HepG2 (cell line): ENCODE measurements at regions of chr1 and their contacts with region 1.

Region 1: DNA sequence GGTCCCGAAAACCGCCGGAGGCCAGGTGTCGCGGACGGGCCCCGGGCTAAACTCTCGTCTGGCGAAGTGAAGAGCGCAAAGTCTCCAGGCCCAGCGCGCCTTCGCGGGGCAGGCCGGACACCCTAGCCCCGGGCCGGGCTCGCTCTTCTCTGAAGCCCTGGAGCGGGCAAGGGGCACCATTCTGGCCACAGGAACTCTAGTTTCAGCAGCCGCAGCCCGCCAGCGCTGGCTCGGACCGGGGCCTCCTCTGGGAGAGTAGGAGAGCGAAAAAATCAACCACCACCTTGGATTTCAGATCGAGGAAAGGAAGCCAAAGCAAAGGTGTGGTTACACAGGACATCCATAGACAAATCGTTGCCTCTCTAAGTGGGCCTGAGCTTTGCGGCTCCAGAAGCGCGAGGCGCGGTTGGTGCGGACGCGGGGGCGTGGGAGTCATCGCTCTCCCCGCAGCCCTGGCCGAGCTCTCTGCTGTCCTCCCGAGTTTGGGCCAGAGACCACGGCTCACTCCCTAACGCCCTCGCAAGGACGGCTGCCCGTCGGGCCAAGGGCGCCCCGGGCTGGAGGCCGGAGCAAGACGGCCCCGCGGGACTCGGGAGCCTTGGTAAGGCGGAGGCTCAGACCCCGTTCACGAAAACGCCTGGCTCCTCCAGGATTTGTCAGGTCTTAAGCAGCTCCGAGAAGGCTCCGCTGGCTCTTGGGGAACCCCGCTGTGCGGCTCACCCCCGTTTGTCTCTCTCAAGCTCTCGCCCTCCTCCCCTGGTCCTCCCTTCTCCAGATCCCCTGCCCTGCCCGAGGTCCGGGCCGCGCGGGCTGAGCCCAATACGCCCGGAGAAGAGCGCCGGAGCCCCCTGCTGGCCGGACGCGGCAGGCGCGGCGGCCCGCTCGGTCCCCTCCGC is 132.9 kb upstream of the DPYD start:
- DNase-seq: peak; percentile 1
- ATAC-seq: peak; percentile 100
- H3K4me3 ChIP-seq: peak overlapping the region; percentile 31 to 67 (median 44); a peak in 4 of 6 replicates
- H3K27ac ChIP-seq: no peak overlapping the region
- H3K4me1 ChIP-seq: peaks cover 10% of the 10 kb centered on the region; the same call in 1 of the 2 replicates
- H3K27me3 ChIP-seq: peaks cover 3 to 16% of the 10 kb centered on the region in 2 experiments; a peak in 3 of 5 replicates
- CTCF ChIP-seq: peak; percentile 76
- EP300 ChIP-seq: no peak
- POLR2A ChIP-seq: no peak
- RAD21 ChIP-seq: peak; percentile 76

Region 2: GRCh38 chr1:96966536-96967138 is 1087.1 kb before region 1 on chr1:
- CTCF ChIA-PET with region 1: interaction called, 15 read pairs
- POLR2A ChIA-PET with region 1: no interaction called
- in situ Hi-C with region 1: loop called (anchors 10 kb)
- intact Hi-C with region 1: no loop called
- DNase-seq: peak; percentile 35
- ATAC-seq: peak; percentile 90
- H3K4me3 ChIP-seq: no peak overlapping the region
- H3K27ac ChIP-seq: no peak overlapping the region
- H3K4me1 ChIP-seq: no peaks in the 10 kb centered on the region
- H3K27me3 ChIP-seq: no peaks in the 10 kb centered on the region
- CTCF ChIP-seq: peak; percentile 75
- EP300 ChIP-seq: no peak
- POLR2A ChIP-seq: no peak
- RAD21 ChIP-seq: no peak

Region 3: DNA sequence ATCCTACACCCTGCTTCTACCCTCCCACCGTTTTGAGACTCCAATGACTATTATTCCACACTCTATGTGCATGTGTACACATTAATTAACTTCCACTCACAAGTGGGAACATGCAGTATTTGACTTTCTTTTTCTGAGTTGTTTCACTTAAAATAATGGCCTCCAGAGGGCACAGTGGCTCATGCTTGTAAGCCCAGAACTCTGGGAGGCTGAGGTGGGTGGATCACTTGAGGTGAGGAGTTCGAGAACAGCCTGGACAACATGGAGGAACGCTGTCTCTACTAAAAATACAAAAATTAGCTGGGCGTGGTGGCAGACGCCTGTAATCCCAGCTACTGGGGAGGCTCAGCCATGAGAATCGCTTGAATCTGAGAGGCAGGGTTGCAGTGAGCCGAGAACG is 867.3 kb before region 1 on chr1:
- CTCF ChIA-PET with region 1: no interaction called
- POLR2A ChIA-PET with region 1: no interaction called
- in situ Hi-C with region 1: loop called (anchors 25 kb)
- intact Hi-C with region 1: loop called (anchors 5 kb)
- DNase-seq: peak; percentile 3
- ATAC-seq: no peak; the same call in 2 of the 3 replicates
- H3K4me3 ChIP-seq: no peak overlapping the region
- H3K27ac ChIP-seq: no peak overlapping the region
- H3K4me1 ChIP-seq: no peaks in the 10 kb centered on the region
- H3K27me3 ChIP-seq: no peaks in the 10 kb centered on the region; a peak in 1 of 5 replicates
- CTCF ChIP-seq: peak; percentile 33
- EP300 ChIP-seq: no peak
- POLR2A ChIP-seq: no peak
- RAD21 ChIP-seq: 0 out of 2 replicates have a peak, but pooled peaks have one; percentile 15

Region 4: GRCh38 chr1:97243973-97244560 is 809.7 kb before region 1 on chr1:
- CTCF ChIA-PET with region 1: no interaction called
- POLR2A ChIA-PET with region 1: no interaction called
- in situ Hi-C with region 1: no loop called
- intact Hi-C with region 1: loop called (anchors 10 kb)
- DNase-seq: no peak
- ATAC-seq: no peak
- H3K4me3 ChIP-seq: no peak overlapping the region
- H3K27ac ChIP-seq: no peak overlapping the region
- H3K4me1 ChIP-seq: no peaks in the 10 kb centered on the region
- H3K27me3 ChIP-seq: no peaks in the 10 kb centered on the region
- CTCF ChIP-seq: 0 out of 2 replicates have a peak, but pooled peaks have one; percentile 5
- EP300 ChIP-seq: no peak
- POLR2A ChIP-seq: no peak
- RAD21 ChIP-seq: no peak

Region 5: DNA sequence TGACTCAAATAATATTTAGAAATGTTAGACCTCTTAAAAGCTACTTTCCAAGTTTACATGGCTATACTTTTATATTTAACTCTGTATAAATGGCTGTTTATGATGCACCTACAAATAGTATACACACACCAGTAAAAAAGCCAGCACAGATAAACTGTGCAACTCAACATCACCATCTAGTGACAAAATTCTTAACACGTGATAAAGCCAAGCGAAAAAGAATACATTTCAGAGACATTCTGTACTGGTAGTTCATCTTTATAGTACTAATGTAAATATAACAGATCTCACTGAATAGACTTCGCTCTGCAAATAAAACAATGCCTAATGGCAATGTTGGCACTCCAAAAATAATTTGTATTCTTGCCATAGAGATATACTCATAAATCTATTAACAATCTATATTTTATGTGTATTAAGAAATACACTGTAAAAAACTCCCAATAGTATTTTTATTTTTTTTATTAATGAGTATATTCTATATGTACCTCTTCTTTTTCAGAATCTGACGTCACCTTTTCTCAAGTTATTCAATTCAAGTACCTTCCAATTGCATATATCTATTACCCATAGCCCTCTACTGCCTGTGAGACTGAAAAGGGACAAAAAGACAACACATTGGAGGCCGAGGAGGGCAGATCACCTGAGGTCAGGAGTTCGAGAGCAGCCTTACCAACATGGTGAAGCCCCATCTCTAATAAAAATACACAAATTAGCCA is 233.1 kb before region 1 on chr1:
- CTCF ChIA-PET with region 1: no interaction called
- POLR2A ChIA-PET with region 1: no interaction called
- in situ Hi-C with region 1: no loop called
- intact Hi-C with region 1: loop called (anchors 5 kb)
- DNase-seq: peak; percentile 5
- ATAC-seq: peak; percentile 67
- H3K4me3 ChIP-seq: no peak overlapping the region
- H3K27ac ChIP-seq: no peak overlapping the region
- H3K4me1 ChIP-seq: no peaks in the 10 kb centered on the region
- H3K27me3 ChIP-seq: no peaks in the 10 kb centered on the region; a peak in 1 of 5 replicates
- CTCF ChIP-seq: peak; percentile 54
- EP300 ChIP-seq: no peak
- POLR2A ChIP-seq: no peak
- RAD21 ChIP-seq: no peak

Region 6: GRCh38 chr1:98468111-98468717 is 414.5 kb after region 1 on chr1:
- CTCF ChIA-PET with region 1: no interaction called
- POLR2A ChIA-PET with region 1: no interaction called
- in situ Hi-C with region 1: no loop called
- intact Hi-C with region 1: loop called (anchors 5 kb)
- DNase-seq: peak; percentile 10
- ATAC-seq: no peak
- H3K4me3 ChIP-seq: no peak overlapping the region
- H3K27ac ChIP-seq: no peak overlapping the region
- H3K4me1 ChIP-seq: no peaks in the 10 kb centered on the region
- H3K27me3 ChIP-seq: no peaks in the 10 kb centered on the region
- CTCF ChIP-seq: peak; percentile 52
- EP300 ChIP-seq: no peak
- POLR2A ChIP-seq: no peak
- RAD21 ChIP-seq: no peak